CD4-positive, alpha-beta T cell (primary cell): ENCODE measurements at regions of chr14 and their contacts with region 1.

Region 1: DNA sequence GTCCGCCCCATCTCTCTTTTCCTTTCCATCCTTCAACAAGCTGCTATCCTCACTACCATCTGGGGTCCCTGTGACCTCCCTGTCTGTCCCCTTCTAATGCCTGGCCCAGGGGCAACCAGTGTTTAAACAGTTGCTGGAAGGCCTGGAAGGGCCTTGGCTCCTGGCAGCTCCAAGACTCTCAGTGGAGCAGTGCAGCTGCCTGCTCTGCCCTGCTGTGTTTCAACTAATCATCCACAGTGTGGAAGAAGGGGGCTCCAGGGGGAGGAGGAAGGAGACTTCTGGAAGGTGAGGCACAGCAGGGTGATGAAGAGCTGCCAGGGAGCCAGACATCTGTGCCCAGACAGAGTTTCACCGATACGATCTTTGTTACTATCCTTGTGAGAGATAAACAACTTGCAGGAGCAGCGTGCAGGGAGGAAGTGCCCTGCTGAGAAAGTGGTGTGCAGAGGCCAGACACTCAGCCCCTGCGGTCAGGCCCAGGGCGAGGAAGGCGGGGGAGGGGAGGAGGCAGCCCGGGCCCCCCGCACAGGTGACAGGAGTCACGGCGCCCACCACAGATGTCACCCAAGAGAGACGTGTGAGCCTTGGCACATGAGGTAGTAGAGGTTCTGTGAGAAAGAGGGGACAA is 1061.8 kb downstream of the BCL11B start:
- DNase-seq: peak in 12 of 14 experiments; percentile 30 to 81 (median 66)
- ATAC-seq: peak; percentile 68
- H3K4me3 ChIP-seq: peak overlapping the region; percentile 7
- H3K4me3 Mint-ChIP-seq: peak overlapping the region; percentile 69
- H3K27ac ChIP-seq: peak overlapping the region; percentile 67 to 70
- H3K27ac Mint-ChIP-seq: peak overlapping the region; percentile 93
- H3K4me1 ChIP-seq: peaks cover 55% of the 10 kb centered on the region
- H3K4me1 Mint-ChIP-seq: peaks cover 80% of the 10 kb centered on the region
- H3K27me3 ChIP-seq: no peaks in the 10 kb centered on the region
- H3K27me3 Mint-ChIP-seq: no peaks in the 10 kb centered on the region
- CTCF ChIP-seq: no peak

Region 2: DNA sequence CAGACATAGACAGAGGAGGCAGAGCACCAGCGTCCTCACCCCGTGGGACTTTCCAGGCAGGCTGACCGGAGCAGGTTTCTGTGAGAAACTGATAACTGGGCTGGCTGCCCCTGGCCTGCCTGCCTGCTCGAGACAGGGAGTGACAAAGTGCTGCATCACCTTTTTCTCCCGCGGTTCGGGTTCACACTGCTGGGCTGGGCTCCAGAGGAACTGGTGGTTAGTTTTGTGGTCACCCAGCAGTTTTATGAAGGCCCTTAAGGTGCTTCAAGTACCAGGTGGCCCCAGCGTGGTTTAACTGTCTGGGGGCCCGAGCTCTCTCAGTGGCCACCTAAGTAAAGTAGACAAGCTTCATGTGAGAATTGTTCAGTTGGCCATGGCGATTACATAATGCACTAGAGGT is 11.8 kb before region 1 on chr14:
- CTCF ChIA-PET with region 1: interaction called, 3 read pairs
- POLR2A ChIA-PET with region 1: interaction called, 10 read pairs
- intact Hi-C with region 1: no loop called
- DNase-seq: peak in 7 of 14 experiments; percentile 35 to 79 (median 61)
- ATAC-seq: peak; percentile 32
- H3K4me3 ChIP-seq: peak overlapping the region; percentile 22
- H3K4me3 Mint-ChIP-seq: peak overlapping the region; percentile 36
- H3K27ac ChIP-seq: peak overlapping the region; percentile 13 to 54
- H3K27ac Mint-ChIP-seq: peak overlapping the region; percentile 93
- H3K4me1 ChIP-seq: peaks cover 72% of the 10 kb centered on the region
- H3K4me1 Mint-ChIP-seq: peaks cover 96% of the 10 kb centered on the region
- H3K27me3 ChIP-seq: no peaks in the 10 kb centered on the region
- H3K27me3 Mint-ChIP-seq: no peaks in the 10 kb centered on the region
- CTCF ChIP-seq: no peak